ENCODE measurements at regions of chr6 and their contacts with region 1.

Region 1: DNA sequence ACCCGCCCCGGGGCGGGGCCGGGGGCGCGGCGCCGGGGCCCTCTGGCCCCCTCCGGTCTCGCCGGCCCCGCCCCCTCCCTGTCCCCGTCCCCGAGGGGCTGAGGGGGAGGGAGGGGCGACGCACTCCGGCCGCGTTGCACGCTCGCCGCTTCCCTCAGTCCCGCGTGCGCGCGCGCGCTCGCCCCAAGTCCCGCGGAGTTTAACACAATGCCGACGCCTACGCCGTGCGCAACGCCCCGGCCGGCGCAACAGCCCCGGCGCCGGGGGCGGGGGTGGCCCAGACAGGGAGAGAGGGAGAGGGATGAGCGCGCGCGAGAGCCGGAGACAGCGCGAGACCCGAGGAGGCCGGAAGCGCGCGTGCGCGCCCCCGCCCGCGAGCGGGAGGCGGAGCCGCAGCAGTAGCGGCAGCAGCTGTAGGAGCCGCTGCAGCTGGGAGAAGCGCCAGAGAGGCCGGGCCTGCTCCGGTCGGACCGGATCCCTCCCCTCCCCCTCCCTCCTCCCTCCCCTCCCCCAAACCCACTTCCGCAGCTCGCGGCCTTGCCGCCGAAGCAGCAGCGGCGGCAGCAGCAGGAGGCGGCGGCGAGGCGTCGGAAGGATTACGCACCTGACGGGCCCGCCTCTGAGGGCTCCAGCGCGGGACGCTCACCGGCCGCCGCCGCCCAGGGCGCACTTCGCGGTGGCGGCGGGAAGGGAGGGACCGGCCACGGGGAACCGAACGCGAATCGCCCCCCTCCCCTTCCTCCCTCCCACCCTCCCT is 905 bp downstream of the ZBTB2 start:
- DNase-seq: peak; percentile 99
- H3K4me3 Mint-ChIP-seq: peak overlapping the region; percentile 39
- H3K27ac Mint-ChIP-seq: peak overlapping the region; percentile 65
- H3K4me1 Mint-ChIP-seq: peaks cover 68% of the 10 kb centered on the region
- H3K27me3 Mint-ChIP-seq: no peaks in the 10 kb centered on the region

Region 2: GRCh38 chr6:149545754-149546528 is 1844.5 kb before region 1 on chr6 and contains the start of gene PPIL4:
- intact Hi-C with region 1: loop called (anchors 2 kb)
- DNase-seq: peak; percentile 96
- H3K4me3 Mint-ChIP-seq: peak within 1 kb of the TSS; percentile 98
- H3K27ac Mint-ChIP-seq: peak within 1 kb of the TSS; percentile 99
- H3K4me1 Mint-ChIP-seq: peaks cover 31% of the 10 kb centered on the region
- H3K27me3 Mint-ChIP-seq: peaks cover 4% of the 10 kb centered on the region
- total RNA-seq, gene PPIL4: 25.0 and 26.1 TPM in 2 replicates

Region 3: GRCh38 chr6:150004783-150005717 is 1385.4 kb before region 1 on chr6:
- intact Hi-C with region 1: loop called (anchors 10 kb)
- DNase-seq: peak; percentile 92
- H3K4me3 Mint-ChIP-seq: peak overlapping the region; percentile 82
- H3K27ac Mint-ChIP-seq: peak overlapping the region; percentile 87
- H3K4me1 Mint-ChIP-seq: peaks cover 62% of the 10 kb centered on the region
- H3K27me3 Mint-ChIP-seq: peaks cover 22% of the 10 kb centered on the region

Region 4: DNA sequence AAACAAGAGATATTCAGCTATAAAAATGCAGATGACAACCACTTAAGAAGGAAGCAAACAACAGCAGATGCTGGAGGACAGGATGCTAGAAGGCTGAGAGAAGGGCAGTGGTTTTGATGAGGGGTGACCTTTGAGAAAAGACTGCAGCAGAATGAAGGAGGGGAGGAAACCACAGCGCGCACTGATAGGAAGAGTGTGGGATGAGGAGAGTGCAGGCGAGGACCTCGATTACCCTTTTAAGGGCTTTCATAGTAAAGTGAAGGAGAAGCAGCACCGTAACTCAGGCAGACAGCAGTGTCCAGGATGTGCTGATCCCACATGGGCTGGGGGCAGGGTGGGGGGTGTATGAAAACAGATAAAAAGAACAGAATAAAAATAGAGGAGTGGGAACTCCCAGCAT is 18.3 kb before region 1 on chr6:
- intact Hi-C with region 1: loop called (anchors 2 kb)
- DNase-seq: no peak
- H3K4me3 Mint-ChIP-seq: peak overlapping the region; percentile 58
- H3K27ac Mint-ChIP-seq: peak overlapping the region; percentile 90
- H3K4me1 Mint-ChIP-seq: peaks cover 64% of the 10 kb centered on the region
- H3K27me3 Mint-ChIP-seq: no peaks in the 10 kb centered on the region

Region 5: DNA sequence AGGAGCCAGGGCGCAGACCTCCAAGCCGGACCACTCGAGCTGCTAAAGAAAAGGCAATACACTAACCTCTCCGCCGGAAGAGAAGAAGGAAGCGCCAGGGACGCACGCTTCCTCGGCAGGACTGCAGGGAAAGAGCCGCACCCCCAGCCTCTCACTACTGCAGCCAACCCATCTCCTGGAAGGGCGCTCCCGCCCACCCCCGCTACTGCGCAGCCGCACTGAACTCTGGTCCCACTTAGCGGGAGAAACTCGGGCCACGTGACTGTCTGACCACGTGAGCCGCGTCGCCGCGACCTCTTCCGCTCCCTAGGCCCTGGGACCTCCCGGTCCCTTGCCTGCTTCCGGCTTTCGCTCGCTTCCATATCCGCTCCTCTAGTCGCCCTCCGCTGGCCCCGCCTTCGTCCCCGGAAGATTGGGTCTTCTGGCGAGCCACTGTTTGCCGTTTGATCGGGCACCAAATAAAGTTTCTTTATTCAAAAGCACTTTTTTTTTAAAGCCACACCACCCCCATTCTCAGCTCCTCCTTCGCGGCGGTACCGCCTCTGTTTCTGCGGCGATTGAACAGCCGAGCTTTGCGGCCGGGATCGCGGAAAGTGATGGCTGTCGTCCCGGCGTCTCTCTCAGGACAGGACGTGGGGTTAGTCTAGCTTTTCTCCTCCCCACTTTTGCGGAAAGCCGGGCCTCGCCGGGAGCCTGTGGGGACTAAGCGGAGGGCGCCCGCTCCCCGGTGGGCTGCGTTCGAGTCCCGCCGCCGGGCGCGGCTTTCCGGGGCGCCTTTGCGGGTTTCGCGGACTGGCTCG is 61.7 kb after region 1 on chr6 and contains the start of gene RMND1:
- intact Hi-C with region 1: loop called (anchors 1 kb)
- DNase-seq: peak; percentile 99
- H3K4me3 Mint-ChIP-seq: peak within 1 kb of the TSS; percentile 97
- H3K27ac Mint-ChIP-seq: peak within 1 kb of the TSS; percentile 90
- H3K4me1 Mint-ChIP-seq: peaks cover 29% of the 10 kb centered on the region
- H3K27me3 Mint-ChIP-seq: peaks cover 4% of the 10 kb centered on the region
- total RNA-seq, gene RMND1: 20.0 and 20.5 TPM in 2 replicates

Region 6: GRCh38 chr6:152301764-152302568 is 911.5 kb after region 1 on chr6:
- intact Hi-C with region 1: loop called (anchors 2 kb)
- DNase-seq: peak; percentile 88
- H3K4me3 Mint-ChIP-seq: peak overlapping the region; percentile 98
- H3K27ac Mint-ChIP-seq: peak overlapping the region; percentile 99
- H3K4me1 Mint-ChIP-seq: peaks cover 41% of the 10 kb centered on the region
- H3K27me3 Mint-ChIP-seq: peaks cover 4% of the 10 kb centered on the region

Region 7: DNA sequence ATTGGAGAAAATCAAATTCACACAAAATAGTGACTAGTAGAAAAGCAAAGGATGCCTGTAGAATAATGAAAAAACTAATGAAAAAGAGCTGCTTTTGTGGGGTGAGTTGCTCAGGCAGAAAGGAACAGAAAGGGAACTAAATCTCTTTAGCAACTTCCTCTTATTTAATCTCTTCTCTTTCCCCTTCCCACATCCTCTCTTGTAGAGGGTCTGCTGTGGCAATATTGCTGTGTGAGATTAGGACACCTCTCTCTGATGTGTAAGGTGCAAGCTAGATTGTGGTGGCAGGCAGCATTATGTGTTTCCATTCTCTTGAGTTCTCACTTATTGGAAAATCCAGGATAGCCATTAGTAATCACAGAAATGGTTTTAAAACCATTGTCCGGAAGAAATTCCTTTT is 1197.0 kb after region 1 on chr6:
- intact Hi-C with region 1: no loop called
- DNase-seq: no peak
- H3K4me3 Mint-ChIP-seq: no peak overlapping the region
- H3K27ac Mint-ChIP-seq: no peak overlapping the region
- H3K4me1 Mint-ChIP-seq: no peaks in the 10 kb centered on the region
- H3K27me3 Mint-ChIP-seq: peaks cover 2% of the 10 kb centered on the region

Measured in activated T-helper 1 cell treated with anti-CD3 and anti-CD28 coated beads, Interleukin-12 subunit alpha, Interleukin-12 subunit beta, Interleukin-2, Interleukin-4 antibody, amounts not matched to agents 30 ng/mL and 10 ng/mL and 1 ng/mL, durations not matched to agents 14 hours and 24 hours and 36 hours (primary cell).